Naive thymus-derived CD4-positive, alpha-beta T cell (primary cell): ENCODE measurements at regions of chr3 and their contacts with region 1.

Region 1: GRCh38 chr3:18703798-18704197 is 278.7 kb upstream of the SATB1 start:
- DNase-seq: no peak
- ATAC-seq: no peak
- H3K4me3 ChIP-seq: no peak overlapping the region
- H3K4me3 Mint-ChIP-seq: no peak overlapping the region
- H3K27ac ChIP-seq: no peak overlapping the region
- H3K27ac Mint-ChIP-seq: peak overlapping the region in 1 of 9 donors; percentile 14
- H3K4me1 ChIP-seq: no peaks in the 10 kb centered on the region
- H3K4me1 Mint-ChIP-seq: peaks cover 6 to 19% (median 10%) of the 10 kb centered on the region in 7 donors
- H3K27me3 ChIP-seq: no peaks in the 10 kb centered on the region
- H3K27me3 Mint-ChIP-seq: no peaks in the 10 kb centered on the region

Region 2: DNA sequence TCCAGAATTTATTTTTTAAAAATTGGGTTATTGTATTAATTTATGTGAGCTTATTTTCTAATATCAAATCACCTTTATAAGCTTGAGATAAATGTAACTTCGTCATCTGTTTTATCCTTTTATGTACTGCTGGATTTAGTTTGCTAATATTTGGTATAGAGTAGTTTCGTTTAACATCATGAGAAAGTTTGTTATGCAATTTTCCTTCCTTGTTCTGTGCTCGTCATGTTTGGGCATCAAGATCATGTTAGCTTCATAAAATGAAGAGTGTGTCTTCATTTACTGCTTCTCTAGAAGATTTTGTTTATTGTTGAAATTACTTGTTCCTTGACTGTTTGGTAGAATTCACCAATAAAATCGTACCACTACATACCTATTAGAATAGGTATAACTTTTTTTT is 16.5 kb before region 1 on chr3:
- CTCF ChIA-PET with region 1: no interaction called
- POLR2A ChIA-PET with region 1: no interaction called
- intact Hi-C with region 1: loop called in 1 of 2 experiments (anchors 2 kb)
- DNase-seq: no peak
- ATAC-seq: no peak
- H3K4me3 ChIP-seq: no peak overlapping the region
- H3K4me3 Mint-ChIP-seq: no peak overlapping the region
- H3K27ac ChIP-seq: no peak overlapping the region
- H3K27ac Mint-ChIP-seq: no peak overlapping the region
- H3K4me1 ChIP-seq: peaks cover 1 to 5% of the 10 kb centered on the region in 2 donors
- H3K4me1 Mint-ChIP-seq: peaks cover 4 to 20% (median 14%) of the 10 kb centered on the region in 7 donors
- H3K27me3 ChIP-seq: no peaks in the 10 kb centered on the region
- H3K27me3 Mint-ChIP-seq: no peaks in the 10 kb centered on the region